WTC11 (cell line): ENCODE measurements at regions of chr17 and their contacts with region 1.

Region 1: GRCh38 chr17:81101614-81102306 is 63.5 kb upstream of the PVALEF start:
- DNase-seq: peak; percentile 96
- ATAC-seq: peak; percentile 97
- H3K4me3 Mint-ChIP-seq: no peak overlapping the region
- H3K27ac Mint-ChIP-seq: no peak overlapping the region
- H3K4me1 Mint-ChIP-seq: peaks cover under 1% of the 10 kb centered on the region
- H3K27me3 Mint-ChIP-seq: no peaks in the 10 kb centered on the region
- CTCF ChIP-seq: peak; percentile 100

Region 2: DNA sequence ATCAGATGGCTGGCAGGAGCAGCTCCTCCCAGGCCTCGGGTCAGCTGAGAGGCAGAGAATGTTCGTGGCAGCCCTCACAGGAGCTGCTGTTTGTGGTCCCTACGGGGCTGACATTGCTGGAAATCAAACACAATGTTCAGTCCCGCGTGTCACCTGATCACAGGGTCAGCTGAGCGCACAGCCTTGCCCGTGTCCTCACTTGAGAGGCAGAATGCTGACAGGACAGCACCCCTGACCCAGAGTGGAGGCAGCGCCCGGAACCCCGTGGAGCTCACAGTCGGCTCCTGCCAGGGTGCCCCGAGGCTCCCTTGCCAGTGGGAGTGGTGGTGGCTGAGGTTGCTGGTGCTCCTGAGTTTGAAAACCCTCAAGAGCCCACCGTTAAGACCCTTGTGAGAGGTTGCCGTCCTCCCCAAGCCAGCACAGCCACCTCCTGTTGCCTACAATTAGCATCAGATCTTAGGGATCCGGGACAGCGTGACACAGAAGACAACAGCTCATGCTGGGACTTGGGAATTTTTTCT is 113.8 kb before region 1 on chr17:
- CTCF ChIA-PET with region 1: interaction called, 18 read pairs
- POLR2A ChIA-PET with region 1: no interaction called
- DNase-seq: no peak
- ATAC-seq: no peak
- H3K4me3 Mint-ChIP-seq: no peak overlapping the region
- H3K27ac Mint-ChIP-seq: no peak overlapping the region
- H3K4me1 Mint-ChIP-seq: peaks cover 5% of the 10 kb centered on the region
- H3K27me3 Mint-ChIP-seq: peaks cover 10% of the 10 kb centered on the region
- CTCF ChIP-seq: no peak

Region 3: DNA sequence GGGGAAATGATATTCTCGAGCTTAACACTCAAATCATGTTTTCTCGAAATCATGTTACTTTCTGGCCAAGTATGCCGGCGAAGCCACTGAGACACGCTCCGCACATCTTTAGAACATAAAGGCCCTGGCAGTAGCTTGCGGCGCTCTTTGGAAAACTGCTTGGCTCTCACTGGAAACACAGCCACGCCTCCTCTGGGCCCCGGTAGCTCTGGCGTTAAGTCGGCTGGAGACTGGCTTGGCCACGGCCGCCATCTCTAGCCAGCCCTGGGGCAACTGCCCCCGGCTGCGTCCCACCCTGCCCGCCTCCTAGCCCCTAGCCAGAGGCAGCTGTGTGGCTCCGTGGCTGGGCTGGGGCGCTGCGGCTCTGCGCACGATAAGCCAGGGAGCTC is 76.0 kb before region 1 on chr17:
- CTCF ChIA-PET with region 1: interaction called, 32 read pairs
- POLR2A ChIA-PET with region 1: no interaction called
- DNase-seq: no peak
- ATAC-seq: no peak
- H3K4me3 Mint-ChIP-seq: no peak overlapping the region
- H3K27ac Mint-ChIP-seq: no peak overlapping the region
- H3K4me1 Mint-ChIP-seq: peaks cover 5% of the 10 kb centered on the region
- H3K27me3 Mint-ChIP-seq: peaks cover 3% of the 10 kb centered on the region; the same call in 1 of the 2 replicates
- CTCF ChIP-seq: no peak

Region 4: GRCh38 chr17:81034779-81035388 is 66.9 kb before region 1 on chr17 and contains the start of gene BAIAP2:
- CTCF ChIA-PET with region 1: interaction called, 13 read pairs
- POLR2A ChIA-PET with region 1: no interaction called
- DNase-seq: peak; percentile 98
- ATAC-seq: peak; percentile 87
- H3K4me3 Mint-ChIP-seq: peak within 1 kb of the TSS; percentile 82
- H3K27ac Mint-ChIP-seq: no peak within 1 kb of the TSS; the same call in 1 of the 2 replicates
- H3K4me1 Mint-ChIP-seq: peaks cover 23% of the 10 kb centered on the region
- H3K27me3 Mint-ChIP-seq: peaks cover 25% of the 10 kb centered on the region
- CTCF ChIP-seq: no peak
- total RNA-seq, gene BAIAP2: 16.9 to 20.7 TPM (median 18.4 TPM) in 3 replicates

Region 5: DNA sequence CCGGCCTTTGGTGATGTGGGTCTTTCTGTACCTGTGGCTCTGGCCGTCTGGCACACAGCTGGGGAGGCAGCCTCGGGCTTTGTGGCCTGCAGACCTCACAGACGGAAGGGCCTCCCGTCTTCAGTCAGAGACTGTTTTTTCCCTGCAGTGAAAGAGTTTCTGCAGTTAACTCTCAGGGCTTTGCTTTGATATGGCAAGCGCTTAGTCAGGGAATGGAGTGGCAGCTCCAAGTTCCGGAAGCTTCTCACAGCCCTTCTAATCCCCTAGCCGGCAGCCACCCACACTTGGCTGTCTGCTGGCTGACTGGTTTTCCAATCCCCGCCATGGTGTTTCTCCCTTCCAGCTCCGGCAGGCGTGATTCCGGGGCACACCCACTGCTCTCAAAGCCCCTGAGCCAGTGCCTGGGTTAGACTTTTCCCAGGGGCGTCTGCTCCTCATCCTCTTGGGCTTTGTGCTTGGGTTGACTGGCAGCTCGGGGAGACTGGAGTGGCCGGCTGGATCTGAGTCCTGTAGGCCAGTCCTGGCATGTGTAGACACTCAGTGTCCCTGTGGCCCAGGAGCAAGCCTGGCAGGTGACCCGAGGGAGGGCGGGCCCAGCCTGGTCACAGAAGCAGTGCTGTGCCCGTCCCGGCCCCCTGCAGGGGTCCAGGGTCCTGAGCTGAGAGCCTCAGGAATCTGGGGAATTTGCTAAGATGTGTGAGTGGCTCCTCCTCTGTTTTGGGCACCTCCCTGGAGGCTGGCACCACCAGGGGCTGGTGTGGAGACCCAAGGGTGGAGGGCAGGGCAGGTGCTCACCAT is 36.9 kb before region 1 on chr17:
- CTCF ChIA-PET with region 1: interaction called, 13 read pairs
- POLR2A ChIA-PET with region 1: interaction called, 3 read pairs
- DNase-seq: no peak
- ATAC-seq: peak; percentile 43
- H3K4me3 Mint-ChIP-seq: no peak overlapping the region
- H3K27ac Mint-ChIP-seq: peak overlapping the region; percentile 65; the same call in 1 of the 2 replicates
- H3K4me1 Mint-ChIP-seq: peaks cover 5% of the 10 kb centered on the region
- H3K27me3 Mint-ChIP-seq: no peaks in the 10 kb centered on the region
- CTCF ChIP-seq: no peak

Region 6: GRCh38 chr17:81119223-81120148 is 17.7 kb after region 1 on chr17:
- CTCF ChIA-PET with region 1: interaction called, 25 read pairs
- POLR2A ChIA-PET with region 1: no interaction called
- DNase-seq: peak; percentile 99
- ATAC-seq: peak; percentile 71
- H3K4me3 Mint-ChIP-seq: peak overlapping the region; percentile 62
- H3K27ac Mint-ChIP-seq: no peak overlapping the region
- H3K4me1 Mint-ChIP-seq: no peaks in the 10 kb centered on the region
- H3K27me3 Mint-ChIP-seq: peaks cover 4% of the 10 kb centered on the region
- CTCF ChIP-seq: no peak; the same call in 1 of the 2 replicates